Activated B cell treated with CpG ODN at 0.5 μM for 24 hours (primary cell): ENCODE measurements at regions of chr1 and their contacts with region 1.

Region 1: GRCh38 chr1:52552505-52553361 is at the start of gene TUT4:
- DNase-seq: peak; percentile 74
- ATAC-seq: peak; percentile 53
- H3K4me3 Mint-ChIP-seq: no peak within 1 kb of the TSS
- H3K27ac Mint-ChIP-seq: peak within 1 kb of the TSS; percentile 83
- H3K4me1 Mint-ChIP-seq: peaks cover 39% of the 10 kb centered on the region
- H3K27me3 Mint-ChIP-seq: no peaks in the 10 kb centered on the region
- CTCF ChIP-seq: no peak
- total RNA-seq, gene TUT4: 143 and 158 TPM in 2 replicates

Region 2: GRCh38 chr1:52334906-52335528 is 217.7 kb before region 1 on chr1:
- CTCF ChIA-PET with region 1: no interaction called
- POLR2A ChIA-PET with region 1: no interaction called
- intact Hi-C with region 1: no loop called
- DNase-seq: no peak
- ATAC-seq: no peak
- H3K4me3 Mint-ChIP-seq: no peak overlapping the region
- H3K27ac Mint-ChIP-seq: no peak overlapping the region
- H3K4me1 Mint-ChIP-seq: no peaks in the 10 kb centered on the region
- H3K27me3 Mint-ChIP-seq: peaks cover 2% of the 10 kb centered on the region
- CTCF ChIP-seq: no peak

Region 3: DNA sequence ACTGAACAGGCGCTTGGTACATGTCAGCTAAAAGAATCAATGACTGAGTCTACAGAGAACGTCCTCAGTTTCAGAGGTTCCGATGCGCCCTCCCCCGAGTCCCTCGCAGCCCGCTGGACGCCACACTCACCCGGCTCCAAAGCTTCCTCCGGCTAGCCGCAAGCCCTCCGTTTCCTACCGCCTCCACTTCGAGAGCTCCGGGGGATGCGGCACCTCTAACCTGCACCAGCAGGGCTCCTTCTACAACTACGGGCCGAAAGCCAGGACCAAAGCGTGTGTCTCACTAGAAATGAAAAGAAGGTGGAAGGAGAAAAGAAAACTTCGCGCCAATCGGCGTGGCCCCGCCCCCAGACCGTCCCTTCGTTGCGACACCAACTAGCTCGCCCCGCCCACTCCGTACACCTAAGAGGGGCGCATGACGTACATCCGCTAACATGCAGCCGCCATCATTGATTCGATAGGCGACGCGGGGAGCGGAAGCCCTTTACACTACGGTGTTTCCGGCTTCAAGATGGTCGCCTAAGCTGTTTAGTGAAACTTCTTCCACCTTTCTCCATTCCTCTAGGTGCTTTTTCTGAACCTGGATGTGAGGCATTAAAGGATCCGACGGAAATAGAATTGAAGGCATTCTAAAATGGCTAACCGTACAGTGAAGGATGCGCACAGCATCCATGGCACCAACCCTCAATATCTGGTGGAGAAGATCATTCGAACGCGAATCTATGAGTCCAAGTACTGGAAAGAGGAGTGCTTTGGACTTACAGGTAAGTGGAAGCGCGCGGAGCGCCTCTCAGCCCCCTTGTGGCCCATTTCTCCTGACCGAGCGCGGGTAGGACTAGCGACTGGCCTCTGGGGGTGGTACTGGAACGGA is 148.4 kb before region 1 on chr1 and contains the starts of genes ORC1 and PRPF38A:
- CTCF ChIA-PET with region 1: no interaction called
- POLR2A ChIA-PET with region 1: interaction called, 21 read pairs
- intact Hi-C with region 1: no loop called
- DNase-seq: peak; percentile 88
- ATAC-seq: peak; percentile 95
- H3K4me3 Mint-ChIP-seq: peak within 1 kb of the TSS; percentile 99
- H3K27ac Mint-ChIP-seq: peak within 1 kb of the TSS; percentile 95
- H3K4me1 Mint-ChIP-seq: peaks cover 32% of the 10 kb centered on the region
- H3K27me3 Mint-ChIP-seq: no peaks in the 10 kb centered on the region
- CTCF ChIP-seq: no peak
- total RNA-seq, gene ORC1: 3.2 TPM in 2 replicates
- total RNA-seq, gene PRPF38A: 75.6 and 78.4 TPM in 2 replicates

Region 4: DNA sequence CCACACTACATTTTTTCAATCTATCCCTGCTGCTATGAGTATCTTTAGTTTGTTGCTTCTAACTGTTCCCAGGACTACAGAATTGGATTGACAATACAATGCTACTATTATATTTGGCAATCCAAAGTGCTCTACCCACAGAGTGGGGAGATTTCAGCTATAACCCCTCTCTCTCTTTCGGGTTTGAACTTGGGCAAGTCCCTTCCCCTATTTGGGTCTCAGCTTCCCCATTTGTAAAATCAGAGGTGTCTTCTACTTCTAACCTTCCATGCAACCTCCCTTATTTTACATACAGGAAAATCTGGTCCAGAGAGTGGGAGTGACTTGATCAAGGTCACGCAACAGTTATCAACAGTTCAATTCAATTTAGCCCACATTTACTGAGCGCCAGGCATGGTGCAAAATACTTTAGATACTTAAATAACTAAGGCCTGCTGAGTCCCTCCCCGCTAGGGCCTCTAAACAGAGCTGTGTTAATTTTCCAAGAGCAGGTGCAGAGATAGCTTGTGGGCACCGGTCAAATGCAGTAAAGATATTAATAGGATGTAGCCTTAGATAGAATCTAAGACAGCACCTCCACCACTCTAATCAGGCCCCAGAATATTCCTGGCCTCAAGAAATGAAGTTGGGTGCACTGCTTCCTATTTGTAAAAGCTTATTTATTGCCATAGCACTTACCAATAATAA is 40.0 kb after region 1 on chr1:
- CTCF ChIA-PET with region 1: no interaction called
- POLR2A ChIA-PET with region 1: interaction called, 24 read pairs
- intact Hi-C with region 1: no loop called
- DNase-seq: no peak
- ATAC-seq: peak; percentile 63
- H3K4me3 Mint-ChIP-seq: peak overlapping the region; percentile 42
- H3K27ac Mint-ChIP-seq: peak overlapping the region; percentile 62
- H3K4me1 Mint-ChIP-seq: peaks cover 40% of the 10 kb centered on the region
- H3K27me3 Mint-ChIP-seq: no peaks in the 10 kb centered on the region
- CTCF ChIP-seq: no peak

Region 5: DNA sequence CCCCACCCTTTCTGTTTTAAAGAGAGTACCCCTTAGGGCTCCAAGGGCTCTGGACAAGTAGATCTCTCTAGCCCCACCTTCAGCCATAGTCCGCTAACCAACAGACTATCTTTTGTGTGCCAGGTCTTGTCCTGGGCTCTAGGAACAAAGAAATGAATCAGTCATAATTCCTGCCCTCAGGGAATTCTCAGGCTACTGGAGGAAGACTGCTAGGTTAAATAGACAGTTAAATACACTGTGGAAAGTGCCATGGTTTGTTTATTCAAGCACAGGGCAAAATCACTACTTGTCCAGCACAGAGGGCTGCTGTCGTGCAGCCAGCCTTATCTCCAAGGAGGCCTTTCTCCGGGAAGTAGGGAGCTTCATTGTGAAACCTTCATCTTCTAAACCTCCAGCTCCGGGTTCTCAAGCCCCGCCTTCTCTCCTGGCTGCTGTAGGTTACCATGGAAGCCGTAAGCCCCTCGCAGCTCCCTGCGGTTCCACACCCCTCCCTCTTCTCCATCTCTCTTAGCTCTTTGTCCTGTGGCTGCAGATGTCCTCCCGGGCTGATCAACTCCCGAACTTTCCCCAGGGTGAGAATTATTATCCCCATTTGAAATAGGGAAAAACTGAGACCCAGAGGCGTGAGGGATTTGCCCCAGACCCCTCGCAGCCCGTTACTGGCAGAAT is 110.0 kb after region 1 on chr1:
- CTCF ChIA-PET with region 1: interaction called, 5 read pairs
- POLR2A ChIA-PET with region 1: interaction called, 23 read pairs
- intact Hi-C with region 1: no loop called
- DNase-seq: no peak
- ATAC-seq: no peak
- H3K4me3 Mint-ChIP-seq: no peak overlapping the region
- H3K27ac Mint-ChIP-seq: peak overlapping the region; percentile 61
- H3K4me1 Mint-ChIP-seq: peaks cover 26% of the 10 kb centered on the region
- H3K27me3 Mint-ChIP-seq: no peaks in the 10 kb centered on the region
- CTCF ChIP-seq: no peak

Region 6: GRCh38 chr1:52702886-52703787 is 150.4 kb after region 1 on chr1:
- CTCF ChIA-PET with region 1: no interaction called
- POLR2A ChIA-PET with region 1: interaction called, 11 read pairs
- intact Hi-C with region 1: no loop called
- DNase-seq: peak; percentile 74
- ATAC-seq: peak; percentile 87
- H3K4me3 Mint-ChIP-seq: peak overlapping the region; percentile 87
- H3K27ac Mint-ChIP-seq: peak overlapping the region; percentile 98
- H3K4me1 Mint-ChIP-seq: peaks cover 26% of the 10 kb centered on the region
- H3K27me3 Mint-ChIP-seq: peaks cover 2% of the 10 kb centered on the region
- CTCF ChIP-seq: no peak